Activated T-helper 2 cell treated with anti-CD3 and anti-CD28 coated beads, Interferon-gamma antibody, Interleukin-2, Interleukin-4, amounts not matched to agents 10 μg/mL and 5 μg/mL and 100 μg/mL, durations not matched to agents 14 hours and 24 hours and 36 hours (primary cell): ENCODE measurements at regions of chr17 and their contacts with region 1.

Region 1: DNA sequence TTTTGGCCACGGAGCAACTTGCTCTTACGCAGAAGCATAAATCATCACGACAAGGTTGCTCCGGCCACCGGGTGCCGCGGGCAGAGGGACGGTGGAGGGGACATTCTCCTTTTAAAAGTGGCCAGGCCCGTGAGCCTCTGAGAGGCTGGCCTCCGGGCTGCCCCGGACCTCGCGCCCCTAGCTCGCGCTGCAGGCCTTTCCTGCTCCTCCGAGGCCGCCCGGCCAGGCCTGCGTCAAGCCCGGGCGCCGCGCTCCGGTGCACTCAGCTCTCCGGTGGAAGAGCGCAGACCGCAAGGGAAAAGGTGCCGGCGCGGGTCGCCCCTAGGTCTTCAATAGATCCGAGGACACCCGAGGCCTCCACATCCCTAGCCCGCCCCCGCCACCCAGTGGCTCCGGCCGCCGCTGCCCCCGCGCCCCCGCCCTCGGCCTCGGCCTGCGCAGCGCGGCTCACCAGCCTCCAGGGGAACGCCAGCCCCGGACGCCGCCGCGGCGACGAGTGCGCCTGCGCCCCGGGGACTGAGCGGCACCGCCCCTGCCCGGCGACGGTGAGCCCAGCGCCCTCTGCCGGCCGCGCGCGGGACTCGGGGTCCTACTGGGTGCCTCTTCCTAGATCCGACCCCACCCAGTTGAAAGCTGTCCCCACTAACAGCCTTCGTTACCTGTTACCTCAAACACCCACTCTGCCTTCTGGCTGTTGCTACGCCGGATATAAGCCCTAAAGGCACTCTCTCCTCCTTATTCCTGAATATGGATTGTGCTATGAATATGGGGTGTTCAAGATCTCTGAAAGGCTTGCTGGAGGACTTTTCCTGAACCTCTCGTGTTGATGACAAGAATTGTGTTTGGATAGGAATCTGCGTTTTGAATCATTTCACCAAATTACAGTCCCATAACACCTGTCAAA is at the start of gene LYRM9:
- DNase-seq: peak; percentile 89
- H3K4me3 Mint-ChIP-seq: peak within 1 kb of the TSS; percentile 83
- H3K27ac Mint-ChIP-seq: peak within 1 kb of the TSS; percentile 66
- H3K4me1 Mint-ChIP-seq: peaks cover 22% of the 10 kb centered on the region
- H3K27me3 Mint-ChIP-seq: peaks cover 27% of the 10 kb centered on the region
- total RNA-seq, gene LYRM9: 3.0 and 3.1 TPM in 2 replicates

Region 2: GRCh38 chr17:28252436-28252835 is 359.3 kb after region 1 on chr17:
- intact Hi-C with region 1: loop called (anchors 1 kb)
- DNase-seq: no peak
- H3K4me3 Mint-ChIP-seq: no peak overlapping the region
- H3K27ac Mint-ChIP-seq: no peak overlapping the region
- H3K4me1 Mint-ChIP-seq: peaks cover 6% of the 10 kb centered on the region
- H3K27me3 Mint-ChIP-seq: peaks cover 10% of the 10 kb centered on the region

Region 3: GRCh38 chr17:28371245-28372202 is 478.4 kb after region 1 on chr17 and contains the start of gene SARM1:
- intact Hi-C with region 1: no loop called
- DNase-seq: peak; percentile 84
- H3K4me3 Mint-ChIP-seq: peak within 1 kb of the TSS; percentile 95
- H3K27ac Mint-ChIP-seq: peak within 1 kb of the TSS; percentile 93
- H3K4me1 Mint-ChIP-seq: peaks cover 13% of the 10 kb centered on the region
- H3K27me3 Mint-ChIP-seq: no peaks in the 10 kb centered on the region
- total RNA-seq, gene SARM1: 35.0 and 35.9 TPM in 2 replicates